Panc1 (cell line): ENCODE measurements at regions of chr1 and their contacts with region 1.

Region 1: GRCh38 chr1:8032366-8032910 is 6.3 kb upstream of the ERRFI1 start:
- DNase-seq: no peak
- ATAC-seq: no peak
- H3K4me3 ChIP-seq: no peak overlapping the region
- H3K27ac ChIP-seq: peak overlapping the region; percentile 98
- H3K4me1 ChIP-seq: peaks cover 51% of the 10 kb centered on the region
- H3K27me3 ChIP-seq: no peaks in the 10 kb centered on the region
- CTCF ChIP-seq: no peak

Region 2: DNA sequence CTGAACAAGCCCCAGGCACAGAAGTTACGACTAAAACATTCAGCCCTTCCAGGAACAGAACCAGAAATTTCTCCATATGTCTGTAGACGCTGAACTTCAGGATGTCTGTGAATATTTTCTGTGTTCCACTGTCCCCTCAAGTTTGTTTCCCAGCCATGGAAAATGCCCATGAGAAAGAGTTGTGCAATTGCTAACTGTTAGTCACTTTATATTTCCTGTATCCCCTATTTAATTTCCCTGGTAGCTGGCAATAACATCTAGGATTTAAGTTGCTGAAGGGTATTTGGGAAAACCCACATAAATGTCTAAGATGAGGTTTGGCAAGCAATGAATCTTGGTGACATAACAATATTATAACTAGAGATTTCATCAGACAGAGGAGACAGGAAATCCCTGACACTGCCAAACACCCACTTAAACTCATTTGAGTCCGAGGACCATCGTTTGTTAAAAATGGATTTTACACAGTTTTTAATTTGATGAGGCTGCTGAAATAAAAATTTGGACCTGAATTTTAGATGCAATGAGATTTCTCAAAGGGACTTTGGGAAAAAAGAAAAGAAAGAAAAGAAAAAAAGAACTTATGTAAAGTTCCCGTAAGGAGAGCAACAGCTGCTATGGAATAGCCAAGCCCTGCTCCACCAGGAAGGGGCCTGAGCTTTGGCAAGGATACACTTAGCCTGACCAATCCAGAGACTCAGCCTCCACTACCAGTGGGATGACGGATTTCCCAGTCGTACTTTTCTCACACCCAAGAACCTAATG is 15.4 kb after region 1 on chr1:
- CTCF ChIA-PET with region 1: no interaction called
- POLR2A ChIA-PET with region 1: no interaction called
- in situ Hi-C with region 1: no loop called
- intact Hi-C with region 1: no loop called
- DNase-seq: no peak
- ATAC-seq: peak; percentile 90
- H3K4me3 ChIP-seq: no peak overlapping the region
- H3K27ac ChIP-seq: peak overlapping the region; percentile 99
- H3K4me1 ChIP-seq: peaks cover 25% of the 10 kb centered on the region
- H3K27me3 ChIP-seq: no peaks in the 10 kb centered on the region
- CTCF ChIP-seq: no peak

Region 3: GRCh38 chr1:8097077-8097799 is 64.8 kb after region 1 on chr1:
- CTCF ChIA-PET with region 1: interaction called, 5 read pairs
- POLR2A ChIA-PET with region 1: interaction called, 4 read pairs
- in situ Hi-C with region 1: loop called (anchors 5 kb)
- intact Hi-C with region 1: loop called (anchors 5 kb)
- DNase-seq: peak; percentile 97
- ATAC-seq: peak; percentile 96
- H3K4me3 ChIP-seq: no peak overlapping the region
- H3K27ac ChIP-seq: peak overlapping the region; percentile 100
- H3K4me1 ChIP-seq: peaks cover 56% of the 10 kb centered on the region
- H3K27me3 ChIP-seq: no peaks in the 10 kb centered on the region
- CTCF ChIP-seq: no peak

Region 4: GRCh38 chr1:8104278-8105236 is 72.1 kb after region 1 on chr1:
- CTCF ChIA-PET with region 1: no interaction called
- POLR2A ChIA-PET with region 1: interaction called, 12 read pairs
- in situ Hi-C with region 1: loop called (anchors 5 kb)
- intact Hi-C with region 1: loop called (anchors 5 kb)
- DNase-seq: no peak
- ATAC-seq: no peak
- H3K4me3 ChIP-seq: no peak overlapping the region
- H3K27ac ChIP-seq: peak overlapping the region; percentile 77
- H3K4me1 ChIP-seq: 0 out of 2 replicates have a peak, but pooled peaks cover 3% of the 10 kb centered on the region
- H3K27me3 ChIP-seq: no peaks in the 10 kb centered on the region
- CTCF ChIP-seq: no peak